ENCODE measurements at regions of chr21 and their contacts with region 1.

Region 1: GRCh38 chr21:34187935-34188334 is 114.6 kb downstream of the MRPS6 start:
- DNase-seq: no peak
- H3K4me3 ChIP-seq: no peak overlapping the region
- H3K27ac ChIP-seq: no peak overlapping the region
- H3K27me3 ChIP-seq: peaks cover 3% of the 10 kb centered on the region
- CTCF ChIP-seq: no peak

Region 2: DNA sequence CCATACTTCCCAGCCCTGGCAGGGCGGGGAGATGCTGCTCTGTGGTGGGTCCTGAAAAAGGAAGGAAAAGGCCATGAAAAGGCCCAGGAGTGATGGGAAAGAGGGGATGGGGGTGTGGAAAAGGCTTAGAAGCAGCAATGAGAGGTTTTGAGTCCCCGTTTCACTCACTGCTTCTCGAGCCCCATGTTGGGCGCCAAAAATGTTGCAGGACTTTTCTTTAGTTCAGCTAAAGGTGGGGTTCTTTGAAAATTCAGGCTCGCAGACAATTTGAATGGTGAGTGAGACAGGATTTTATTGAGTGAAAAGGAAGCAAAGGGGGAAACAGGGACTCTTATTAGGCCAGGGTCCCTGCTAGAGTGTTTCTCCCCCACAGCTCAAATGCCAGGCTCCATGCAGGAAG is 21.5 kb before region 1 on chr21:
- CTCF ChIA-PET with region 1: no interaction called
- POLR2A ChIA-PET with region 1: no interaction called
- DNase-seq: no peak
- H3K4me3 ChIP-seq: no peak overlapping the region
- H3K27ac ChIP-seq: no peak overlapping the region
- H3K27me3 ChIP-seq: no peaks in the 10 kb centered on the region
- CTCF ChIP-seq: no peak

Region 3: DNA sequence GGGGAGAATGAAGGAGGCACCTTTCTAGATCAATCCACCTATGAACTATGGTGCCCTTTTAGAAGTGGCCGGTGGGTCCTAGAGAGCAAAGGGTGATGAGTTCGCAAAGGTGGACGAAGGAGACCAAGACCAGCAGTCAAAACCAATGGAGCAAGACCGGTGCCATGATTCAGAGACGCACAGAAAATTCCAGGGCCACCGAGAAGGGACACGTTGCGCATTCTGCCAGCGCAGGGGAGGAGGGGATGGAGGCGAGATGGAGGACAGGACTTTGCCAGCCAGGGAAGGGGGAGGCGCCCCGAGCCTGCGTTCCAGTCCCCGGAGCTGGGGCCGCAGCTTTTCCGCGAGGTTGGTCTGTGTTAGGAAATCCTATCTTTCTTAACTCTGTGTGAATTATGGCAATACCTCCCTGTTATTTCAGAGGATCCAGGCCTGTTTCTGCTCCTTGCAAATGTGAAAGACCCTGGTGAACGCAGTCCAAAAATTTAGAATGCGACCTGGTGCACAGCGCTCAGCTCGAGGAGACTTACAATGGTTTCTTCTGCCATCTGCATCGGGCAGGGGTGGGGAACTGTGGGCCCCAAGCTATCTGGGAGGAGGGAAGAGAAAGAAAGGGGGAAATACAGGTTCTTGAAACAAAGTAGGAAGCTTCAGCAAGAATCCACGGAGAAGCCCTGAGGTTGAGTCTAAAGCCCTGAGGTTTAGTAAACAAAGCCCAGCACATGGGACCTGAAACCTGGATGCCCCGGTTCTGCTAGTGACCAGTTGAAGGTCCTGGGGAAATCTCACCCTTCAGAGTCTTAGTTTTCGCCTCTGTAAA is 14.8 kb after region 1 on chr21:
- CTCF ChIA-PET with region 1: interaction called, 11 read pairs
- POLR2A ChIA-PET with region 1: no interaction called
- DNase-seq: no peak
- H3K4me3 ChIP-seq: no peak overlapping the region
- H3K27ac ChIP-seq: no peak overlapping the region
- H3K27me3 ChIP-seq: no peaks in the 10 kb centered on the region
- CTCF ChIP-seq: no peak